ENCODE measurements at regions of chr12 and their contacts with region 1.

Region 1: GRCh38 chr12:67268896-67269631 is at the start of gene CAND1:
- DNase-seq: peak; percentile 91 to 99 (median 98)
- ATAC-seq: peak; percentile 72 to 78
- H3K4me3 Mint-ChIP-seq: peak within 1 kb of the TSS; percentile 73 to 94 (median 92)
- H3K27ac Mint-ChIP-seq: peak within 1 kb of the TSS; percentile 97 to 100 (median 98)
- H3K4me1 Mint-ChIP-seq: peaks cover 16 to 55% (median 50%) of the 10 kb centered on the region in 4 donors
- H3K27me3 Mint-ChIP-seq: no peaks in the 10 kb centered on the region
- polyA plus RNA-seq, gene CAND1: 44.5 to 66.3 (median 58.7) TPM

Region 2: GRCh38 chr12:66169221-66170170 is 1099.6 kb before region 1 on chr12 and contains the start of gene TMBIM4:
- POLR2A ChIA-PET with region 1: interaction called, 12 read pairs
- DNase-seq: peak; percentile 72 to 92 (median 82)
- ATAC-seq: peak; percentile 79 to 82
- H3K4me3 Mint-ChIP-seq: peak within 1 kb of the TSS; percentile 93 to 98 (median 96)
- H3K27ac Mint-ChIP-seq: peak within 1 kb of the TSS; percentile 94 to 99 (median 98)
- H3K4me1 Mint-ChIP-seq: peaks cover 19 to 51% (median 45%) of the 10 kb centered on the region in 4 donors
- H3K27me3 Mint-ChIP-seq: peaks cover 0 to 2% (median 0%) of the 10 kb centered on the region in 5 donors
- polyA plus RNA-seq, gene TMBIM4: 241 to 335 (median 328) TPM

Region 3: GRCh38 chr12:67068761-67069450 is 200.2 kb before region 1 on chr12:
- POLR2A ChIA-PET with region 1: interaction called, 15 read pairs
- DNase-seq: peak in 9 of 10 donors; percentile 13 to 71 (median 45)
- ATAC-seq: peak; percentile 78 to 81
- H3K4me3 Mint-ChIP-seq: peak overlapping the region; percentile 86 to 98 (median 94)
- H3K27ac Mint-ChIP-seq: peak overlapping the region in 9 of 10 donors; percentile 31 to 94 (median 89)
- H3K4me1 Mint-ChIP-seq: peaks cover 16 to 25% (median 18%) of the 10 kb centered on the region in 4 donors
- H3K27me3 Mint-ChIP-seq: peaks cover 3 to 63% (median 27%) of the 10 kb centered on the region in 5 donors

Region 4: GRCh38 chr12:68807576-68808387 is 1538.7 kb after region 1 on chr12 and contains the start of gene MDM2:
- POLR2A ChIA-PET with region 1: interaction called, 14 read pairs
- DNase-seq: peak; percentile 94 to 98 (median 97)
- ATAC-seq: peak; percentile 87 to 91
- H3K4me3 Mint-ChIP-seq: peak within 1 kb of the TSS; percentile 89 to 97 (median 94)
- H3K27ac Mint-ChIP-seq: peak within 1 kb of the TSS; percentile 94 to 99 (median 98)
- H3K4me1 Mint-ChIP-seq: peaks cover 7 to 36% (median 22%) of the 10 kb centered on the region in 4 donors
- H3K27me3 Mint-ChIP-seq: no peaks in the 10 kb centered on the region
- polyA plus RNA-seq, gene MDM2: 7.6 to 17.9 (median 12.8) TPM